ENCODE measurements at regions of chr16 and their contacts with region 1.

Region 1: DNA sequence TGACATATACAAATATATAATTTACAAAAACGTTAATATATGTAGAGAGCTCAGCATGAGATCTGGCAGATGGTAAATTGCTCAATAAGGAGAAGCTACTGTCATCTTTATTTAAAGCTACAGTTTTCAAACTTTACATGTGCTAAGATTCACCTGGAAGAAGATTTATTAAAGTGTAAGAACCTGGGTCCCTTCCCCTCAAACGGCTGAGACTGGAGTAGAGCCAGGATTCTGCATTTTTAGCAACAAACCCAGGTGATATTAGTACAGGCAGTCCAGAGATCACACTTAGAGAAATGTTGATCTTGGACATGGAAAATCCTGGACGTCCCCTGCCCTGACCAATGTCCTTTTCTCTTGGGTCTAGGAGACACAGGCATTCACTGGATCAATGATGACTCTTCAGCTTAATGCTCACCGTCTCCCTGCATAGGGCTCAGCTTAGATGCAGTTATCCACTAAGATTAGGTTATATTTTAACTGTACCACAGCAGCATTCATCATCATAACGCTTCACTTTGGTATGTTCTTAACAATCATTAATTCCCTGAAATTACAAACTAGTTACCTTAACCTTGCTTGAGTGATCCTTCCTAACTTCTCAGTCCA is 20.4 kb downstream of the CDR2 start:
- DNase-seq: peak in 1 of 2 experiments; percentile 52
- H3K4me3 ChIP-seq: no peak overlapping the region
- H3K4me3 Mint-ChIP-seq: peak overlapping the region; percentile 29
- H3K27ac Mint-ChIP-seq: peak overlapping the region; percentile 62
- H3K4me1 ChIP-seq: peaks cover 47% of the 10 kb centered on the region
- H3K4me1 Mint-ChIP-seq: peaks cover 7% of the 10 kb centered on the region
- H3K27me3 ChIP-seq: no peaks in the 10 kb centered on the region
- H3K27me3 Mint-ChIP-seq: no peaks in the 10 kb centered on the region
- CTCF ChIP-seq: no peak

Region 2: GRCh38 chr16:22070361-22071330 is 283.4 kb before region 1 on chr16:
- CTCF ChIA-PET with region 1: no interaction called
- POLR2A ChIA-PET with region 1: no interaction called
- intact Hi-C with region 1: no loop called
- DNase-seq: no peak
- H3K4me3 ChIP-seq: no peak overlapping the region
- H3K4me3 Mint-ChIP-seq: no peak overlapping the region
- H3K27ac Mint-ChIP-seq: no peak overlapping the region
- H3K4me1 ChIP-seq: no peaks in the 10 kb centered on the region
- H3K4me1 Mint-ChIP-seq: no peaks in the 10 kb centered on the region
- H3K27me3 ChIP-seq: no peaks in the 10 kb centered on the region
- H3K27me3 Mint-ChIP-seq: no peaks in the 10 kb centered on the region
- CTCF ChIP-seq: no peak

Region 3: GRCh38 chr16:22374311-22375116 is 20.5 kb after region 1 on chr16 and contains the start of gene CDR2:
- CTCF ChIA-PET with region 1: no interaction called
- POLR2A ChIA-PET with region 1: interaction called, 5 read pairs
- intact Hi-C with region 1: loop called (anchors 1 kb)
- DNase-seq: peak; percentile 97 to 98
- H3K4me3 ChIP-seq: peak within 1 kb of the TSS; percentile 67
- H3K4me3 Mint-ChIP-seq: peak within 1 kb of the TSS; percentile 99
- H3K27ac Mint-ChIP-seq: peak within 1 kb of the TSS; percentile 96
- H3K4me1 ChIP-seq: peaks cover 32% of the 10 kb centered on the region
- H3K4me1 Mint-ChIP-seq: peaks cover 15% of the 10 kb centered on the region
- H3K27me3 ChIP-seq: no peaks in the 10 kb centered on the region
- H3K27me3 Mint-ChIP-seq: no peaks in the 10 kb centered on the region
- CTCF ChIP-seq: no peak
- total RNA-seq, gene CDR2: 24.3 and 31.0 TPM in 2 replicates